ENCODE measurements at regions of chr16 and their contacts with region 1.

Region 1: GRCh38 chr16:56600398-56600999 is 7.9 kb upstream of the MT2A start:
- DNase-seq: no peak
- H3K4me3 ChIP-seq: no peak overlapping the region
- H3K27ac ChIP-seq: no peak overlapping the region
- H3K4me1 ChIP-seq: no peaks in the 10 kb centered on the region
- H3K27me3 ChIP-seq: peaks cover 0 to under 1% (median 0%) of the 10 kb centered on the region in 4 experiments; a peak in 1 of 7 replicates
- CTCF ChIP-seq: peak; percentile 34 to 66 (median 58)
- EP300 ChIP-seq: no peak
- POLR2A ChIP-seq: no peak
- RAD21 ChIP-seq: peak; percentile 52 to 57

Region 2: GRCh38 chr16:56518435-56518834 is 82.1 kb before region 1 on chr16:
- CTCF ChIA-PET with region 1: interaction called, 14 read pairs
- POLR2A ChIA-PET with region 1: no interaction called
- DNase-seq: no peak
- H3K4me3 ChIP-seq: no peak overlapping the region
- H3K27ac ChIP-seq: no peak overlapping the region
- H3K4me1 ChIP-seq: no peaks in the 10 kb centered on the region; a peak in 1 of 7 replicates
- H3K27me3 ChIP-seq: peaks cover 0 to 7% (median 1%) of the 10 kb centered on the region in 4 experiments; a peak in 4 of 7 replicates
- CTCF ChIP-seq: no peak
- EP300 ChIP-seq: no peak
- POLR2A ChIP-seq: no peak
- RAD21 ChIP-seq: no peak

Region 3: DNA sequence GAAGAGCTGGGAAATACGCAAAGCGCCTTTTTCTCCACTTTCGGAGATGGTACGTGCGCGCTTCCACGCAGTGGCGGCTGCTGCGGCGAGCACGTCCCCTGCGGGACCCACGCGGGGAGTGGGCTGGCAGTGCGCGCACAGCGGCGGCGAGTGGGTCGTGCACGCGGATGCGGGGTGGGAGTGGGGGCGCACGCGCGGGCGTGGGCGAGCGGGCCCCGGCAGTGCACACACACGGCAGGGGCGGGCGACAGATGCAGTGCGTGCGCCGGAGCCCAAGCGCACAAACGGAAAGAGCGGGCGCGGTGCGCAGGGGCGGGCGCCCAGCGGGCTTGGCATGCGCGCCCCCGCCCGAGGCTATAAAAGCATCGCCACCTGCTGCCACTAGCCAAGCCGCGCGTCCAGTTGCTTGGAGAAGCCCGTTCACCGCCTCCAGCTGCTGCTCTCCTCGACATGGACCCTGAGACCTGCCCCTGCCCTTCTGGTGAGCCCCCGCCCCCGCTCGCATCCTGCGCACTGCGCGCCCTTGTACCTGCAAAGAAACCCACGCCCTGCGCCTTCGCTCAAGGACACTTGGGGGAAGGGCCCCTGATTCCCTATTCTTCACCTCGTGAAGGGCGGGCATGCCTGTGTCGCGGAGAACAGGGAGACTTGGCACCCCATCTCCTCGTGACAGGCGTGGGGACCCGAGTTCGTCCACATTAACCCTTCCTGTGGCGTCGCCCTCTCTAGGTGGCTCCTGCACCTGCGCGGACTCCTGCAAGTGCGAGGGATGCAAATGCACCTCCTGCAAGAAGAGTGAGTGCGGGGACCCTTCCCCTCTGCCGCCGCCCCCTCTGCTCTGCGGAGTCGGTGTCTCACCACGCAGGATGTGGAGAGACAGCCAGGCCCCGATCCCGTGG is 11.1 kb before region 1 on chr16 and contains the start of gene MT3:
- CTCF ChIA-PET with region 1: interaction called, 25 read pairs
- POLR2A ChIA-PET with region 1: no interaction called
- DNase-seq: peak in 1 of 2 experiments; percentile 64
- H3K4me3 ChIP-seq: peak within 1 kb of the TSS; percentile 28 to 65 (median 38)
- H3K27ac ChIP-seq: no peak within 1 kb of the TSS
- H3K4me1 ChIP-seq: peaks cover 0 to 13% (median 4%) of the 10 kb centered on the region in 4 experiments; a peak in 5 of 7 replicates
- H3K27me3 ChIP-seq: peaks cover 20 to 52% (median 43%) of the 10 kb centered on the region in 4 experiments
- CTCF ChIP-seq: no peak
- EP300 ChIP-seq: no peak
- POLR2A ChIP-seq: no peak
- RAD21 ChIP-seq: no peak
- total RNA-seq, gene MT3: not detected in 2 replicates

Region 4: DNA sequence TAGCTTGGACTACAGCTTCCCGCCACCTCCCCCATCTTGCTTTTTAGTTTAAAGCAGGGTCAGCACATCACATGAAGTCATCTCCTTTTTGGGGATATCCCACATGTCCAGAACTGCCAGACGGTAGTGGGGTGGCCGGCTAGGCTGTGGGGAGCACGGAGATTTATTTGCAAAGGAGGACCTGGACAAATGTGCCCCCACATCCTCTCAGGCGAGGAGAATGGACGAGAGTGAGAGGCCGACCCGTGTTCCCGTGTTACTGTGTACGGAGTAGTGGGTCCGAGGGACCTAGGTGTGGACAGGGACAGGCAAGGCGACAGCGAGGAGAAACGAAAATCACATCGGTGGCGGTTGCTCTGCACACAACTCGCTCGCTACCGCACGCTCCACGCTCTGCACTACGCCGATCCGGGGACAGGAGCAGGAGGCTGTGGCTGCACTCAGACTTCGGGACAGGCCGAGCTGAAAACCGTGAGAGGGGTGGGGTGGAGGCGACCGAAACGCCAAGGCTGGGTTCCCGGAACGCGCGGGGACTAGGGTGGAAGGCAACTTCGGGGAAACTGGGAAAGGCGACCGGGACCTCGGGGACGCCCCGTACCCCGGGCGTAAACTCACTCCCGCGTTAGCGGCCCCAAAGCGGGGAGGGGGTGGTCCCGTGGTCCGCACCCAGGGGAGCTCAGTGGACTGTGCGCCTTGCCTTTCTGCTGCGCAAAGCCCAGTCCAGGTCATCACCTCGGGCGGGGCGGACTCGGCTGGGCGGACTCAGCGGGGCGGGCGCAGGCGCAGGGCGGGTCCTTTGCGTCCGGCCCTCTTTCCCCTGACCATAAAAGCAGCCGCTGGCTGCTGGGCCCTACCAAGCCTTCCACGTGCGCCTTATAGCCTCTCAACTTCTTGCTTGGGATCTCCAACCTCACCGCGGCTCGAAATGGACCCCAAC is 37.6 kb after region 1 on chr16 and contains the start of gene MT1A:
- CTCF ChIA-PET with region 1: interaction called, 29 read pairs
- POLR2A ChIA-PET with region 1: no interaction called
- DNase-seq: peak in 1 of 2 experiments; percentile 81
- H3K4me3 ChIP-seq: peak within 1 kb of the TSS; percentile 7 to 56 (median 27); a peak in 6 of 8 replicates
- H3K27ac ChIP-seq: no peak within 1 kb of the TSS
- H3K4me1 ChIP-seq: peaks cover 3 to 19% (median 8%) of the 10 kb centered on the region in 4 experiments
- H3K27me3 ChIP-seq: peaks cover 90 to 100% (median 99%) of the 10 kb centered on the region in 4 experiments
- CTCF ChIP-seq: no peak
- EP300 ChIP-seq: no peak
- POLR2A ChIP-seq: no peak
- RAD21 ChIP-seq: no peak
- total RNA-seq, gene MT1A: not detected in 2 replicates

Region 5: GRCh38 chr16:56667581-56668571 is 67.4 kb after region 1 on chr16 and contains the start of gene MT1G:
- CTCF ChIA-PET with region 1: interaction called, 12 read pairs
- POLR2A ChIA-PET with region 1: interaction called, 3 read pairs
- DNase-seq: peak in 1 of 2 experiments; percentile 70
- H3K4me3 ChIP-seq: peak within 1 kb of the TSS; percentile 13 to 53 (median 16); a peak in 5 of 8 replicates
- H3K27ac ChIP-seq: no peak within 1 kb of the TSS
- H3K4me1 ChIP-seq: peaks cover 3 to 16% (median 12%) of the 10 kb centered on the region in 4 experiments
- H3K27me3 ChIP-seq: peaks cover 81 to 98% (median 93%) of the 10 kb centered on the region in 4 experiments
- CTCF ChIP-seq: no peak
- EP300 ChIP-seq: no peak
- POLR2A ChIP-seq: no peak
- RAD21 ChIP-seq: no peak
- total RNA-seq, gene MT1G: 17.7 and 19.7 TPM in 2 replicates